Mammary epithelial cell (primary cell): ENCODE measurements at regions of chr12 and their contacts with region 1.

Region 1: DNA sequence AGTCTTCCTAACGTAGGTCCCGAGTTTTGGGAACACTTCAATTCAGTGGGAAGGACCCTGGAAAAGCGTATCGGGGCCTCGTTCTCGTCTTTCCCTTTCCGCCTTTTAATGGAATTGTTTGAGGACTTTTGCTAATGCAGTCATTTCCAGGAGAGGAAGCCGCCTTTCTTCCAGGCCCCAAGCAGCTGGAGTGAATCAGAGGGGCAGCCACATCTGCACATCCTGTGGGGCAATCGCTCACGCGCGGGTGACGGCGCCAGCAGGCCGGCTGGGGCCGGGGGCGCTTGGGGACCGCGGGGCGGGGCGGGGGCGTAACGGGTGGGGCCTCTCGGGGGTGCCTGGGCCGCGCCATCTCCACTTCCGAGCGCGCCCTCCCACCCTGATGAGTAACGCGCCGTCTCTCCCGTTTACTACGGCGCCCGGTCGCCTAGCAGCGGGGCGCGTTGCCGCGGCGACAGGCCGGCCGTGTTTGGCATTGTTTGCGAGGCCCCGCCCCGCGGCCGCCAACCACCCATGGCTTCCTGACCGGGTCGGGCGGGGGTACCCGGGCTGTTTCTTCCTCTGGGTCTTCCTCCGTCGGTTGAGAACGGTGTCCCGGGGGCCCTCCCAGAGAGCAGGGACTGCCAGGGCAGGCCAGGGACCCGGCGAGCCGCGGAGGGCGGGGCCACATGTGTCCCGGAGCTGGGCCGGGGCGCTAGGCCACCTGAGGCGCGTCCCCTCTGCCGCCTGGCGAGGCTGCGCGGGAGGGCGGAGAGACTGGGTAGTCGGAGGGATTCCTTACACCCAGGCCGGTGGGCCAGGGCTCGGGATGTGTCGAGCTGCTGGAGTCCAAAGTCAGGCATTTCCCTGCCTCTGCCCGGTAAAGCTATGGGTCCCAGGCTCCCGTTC is 2.3 kb downstream of the GSG1 start:
- DNase-seq: peak; percentile 89
- H3K4me3 ChIP-seq: peak overlapping the region; percentile 28 to 47 (median 32)
- H3K27ac ChIP-seq: peak overlapping the region; percentile 100
- H3K4me1 ChIP-seq: peaks cover 54% of the 10 kb centered on the region
- H3K27me3 ChIP-seq: no peaks in the 10 kb centered on the region
- CTCF ChIP-seq: no peak

Region 2: DNA sequence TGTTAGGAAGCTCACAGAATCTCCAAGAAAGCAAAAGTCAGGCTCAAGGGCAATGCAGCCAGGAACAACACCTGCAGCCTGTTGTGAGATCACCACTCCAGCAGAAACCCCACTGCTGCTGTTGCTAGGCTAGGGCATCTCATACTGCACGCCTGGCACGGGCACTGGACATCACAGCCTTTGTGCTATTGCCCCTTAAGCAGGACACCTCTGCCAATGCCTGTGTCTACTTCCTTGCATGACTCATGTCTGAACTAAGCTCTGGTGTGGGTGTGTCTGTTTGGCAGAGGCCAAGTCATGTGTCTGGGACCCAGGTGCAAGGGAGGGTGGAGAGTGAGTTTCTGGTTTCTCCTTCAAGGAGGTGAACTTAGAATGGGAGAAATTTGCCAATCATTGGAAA is 297.9 kb before region 1 on chr12:
- CTCF ChIA-PET with region 1: no interaction called
- dilution Hi-C with region 1: no loop called
- in situ Hi-C with region 1: no loop called
- intact Hi-C with region 1: loop called (anchors 5 kb)
- DNase-seq: peak; percentile 100
- H3K4me3 ChIP-seq: no peak overlapping the region
- H3K27ac ChIP-seq: peak overlapping the region; percentile 100
- H3K4me1 ChIP-seq: peaks cover 39% of the 10 kb centered on the region
- H3K27me3 ChIP-seq: no peaks in the 10 kb centered on the region
- CTCF ChIP-seq: no peak

Region 3: GRCh38 chr12:13023811-13024530 is 77.2 kb before region 1 on chr12:
- CTCF ChIA-PET with region 1: no interaction called
- dilution Hi-C with region 1: no loop called
- in situ Hi-C with region 1: no loop called
- intact Hi-C with region 1: loop called (anchors 2 kb)
- DNase-seq: no peak
- H3K4me3 ChIP-seq: no peak overlapping the region
- H3K27ac ChIP-seq: no peak overlapping the region
- H3K4me1 ChIP-seq: no peaks in the 10 kb centered on the region
- H3K27me3 ChIP-seq: no peaks in the 10 kb centered on the region
- CTCF ChIP-seq: no peak